H1 (cell line): ENCODE measurements at regions of chr2 and their contacts with region 1.

Region 1: DNA sequence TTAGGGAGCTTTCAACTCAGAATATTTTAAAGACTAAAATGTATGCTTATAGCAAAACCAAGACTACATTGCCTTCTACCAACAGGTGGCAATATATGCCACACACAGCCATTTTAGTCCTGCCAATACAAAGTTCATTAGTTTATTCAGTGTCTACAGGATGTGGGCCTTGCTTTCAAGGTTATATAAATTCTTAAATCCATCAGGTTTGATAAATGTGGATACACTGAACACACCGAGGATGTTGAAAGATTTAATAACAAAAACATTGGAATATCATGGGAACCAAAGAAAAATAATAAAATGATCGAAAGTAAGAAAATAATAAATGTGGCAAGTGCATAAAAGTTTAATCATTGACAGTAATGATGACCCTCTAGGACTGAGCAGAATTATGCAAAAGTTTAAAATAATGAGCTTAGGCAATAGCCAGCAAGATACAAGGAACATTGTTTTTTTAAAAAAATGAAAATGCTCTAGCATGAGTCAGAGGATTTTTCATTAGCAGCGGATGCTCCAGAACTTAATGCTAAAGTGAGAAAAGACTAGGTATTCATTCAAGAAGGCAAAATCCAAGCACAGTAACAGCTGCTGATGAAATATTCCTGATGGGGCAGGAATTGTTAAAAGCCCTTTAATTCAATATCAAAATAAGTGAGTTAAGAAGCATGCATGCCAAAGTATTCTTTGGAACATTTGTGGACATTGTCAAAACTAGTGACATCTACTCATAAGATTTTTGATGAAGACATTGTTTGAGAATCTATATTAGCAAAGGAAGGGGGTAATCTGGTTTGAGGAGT is 14.2 kb downstream of the SCN9A start:
- DNase-seq: no peak
- H3K4me3 ChIP-seq: no peak overlapping the region
- H3K27ac ChIP-seq: no peak overlapping the region
- H3K4me1 ChIP-seq: no peaks in the 10 kb centered on the region
- H3K27me3 ChIP-seq: no peaks in the 10 kb centered on the region
- CTCF ChIP-seq: peak in 2 of 3 experiments; percentile 47 to 52; a peak in 2 of 4 replicates
- EP300 ChIP-seq: no peak
- POLR2A ChIP-seq: no peak
- RAD21 ChIP-seq: peak; percentile 60 to 61

Region 2: DNA sequence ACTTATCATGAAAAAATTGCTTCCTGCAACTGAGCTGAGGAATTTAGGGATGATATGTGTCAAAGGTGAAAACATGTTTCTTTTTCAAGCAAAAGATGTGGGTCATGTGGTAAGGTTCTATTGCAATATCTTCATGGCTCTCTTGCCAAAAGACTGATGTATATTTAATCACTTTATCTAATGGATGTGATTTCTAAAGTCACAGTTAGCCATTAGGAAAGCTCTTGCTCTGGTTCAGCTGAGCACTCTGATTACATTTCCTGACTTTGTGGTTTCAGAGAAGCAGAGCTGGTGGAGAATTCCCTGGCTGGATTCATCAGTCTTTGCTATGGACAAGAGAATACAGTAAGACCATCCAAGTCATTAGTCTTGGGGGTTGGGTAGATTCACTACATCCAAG is 10.2 kb before region 1 on chr2:
- CTCF ChIA-PET with region 1: interaction called, 12 read pairs
- POLR2A ChIA-PET with region 1: no interaction called
- DNase-seq: no peak
- H3K4me3 ChIP-seq: no peak overlapping the region
- H3K27ac ChIP-seq: no peak overlapping the region
- H3K4me1 ChIP-seq: no peaks in the 10 kb centered on the region
- H3K27me3 ChIP-seq: no peaks in the 10 kb centered on the region
- CTCF ChIP-seq: no peak
- EP300 ChIP-seq: no peak
- POLR2A ChIP-seq: no peak
- RAD21 ChIP-seq: no peak

Region 3: GRCh38 chr2:166375736-166376487 is 14.4 kb after region 1 on chr2 and contains the start of gene SCN9A:
- CTCF ChIA-PET with region 1: interaction called, 15 read pairs
- POLR2A ChIA-PET with region 1: interaction called, 4 read pairs
- DNase-seq: peak; percentile 67 to 85
- H3K4me3 ChIP-seq: peak within 1 kb of the TSS; percentile 75 to 87 (median 80)
- H3K27ac ChIP-seq: no peak within 1 kb of the TSS
- H3K4me1 ChIP-seq: peaks cover 0 to 13% (median 9%) of the 10 kb centered on the region in 4 experiments; a peak in 5 of 7 replicates
- H3K27me3 ChIP-seq: no peaks in the 10 kb centered on the region; a peak in 1 of 7 replicates
- CTCF ChIP-seq: no peak
- EP300 ChIP-seq: no peak
- POLR2A ChIP-seq: peak in 1 of 2 experiments; percentile 36; a peak in 1 of 3 replicates
- RAD21 ChIP-seq: peak in 1 of 2 experiments; percentile 24; a peak in 2 of 4 replicates
- total RNA-seq, gene SCN9A: 6.1 and 6.2 TPM in 2 replicates

Region 4: DNA sequence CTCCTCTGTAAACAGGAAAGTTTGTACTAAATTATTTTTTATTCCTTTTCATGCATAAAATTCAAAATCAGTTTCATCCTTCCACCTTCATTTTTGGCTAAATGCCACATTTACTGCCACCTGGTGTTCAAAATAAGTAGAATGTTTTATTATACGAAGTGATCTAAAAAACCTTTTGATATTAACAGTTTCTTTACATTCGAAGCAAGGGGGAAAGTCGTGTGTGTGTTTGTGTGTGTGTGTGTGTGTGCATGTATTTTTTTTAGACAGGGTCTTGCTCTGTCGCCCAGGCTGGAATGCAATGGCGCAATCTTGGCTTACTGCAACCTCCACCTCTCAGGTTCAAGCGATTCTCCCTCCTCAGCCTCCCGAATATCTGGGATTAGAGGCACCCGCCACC is 23.2 kb after region 1 on chr2:
- CTCF ChIA-PET with region 1: interaction called, 20 read pairs
- POLR2A ChIA-PET with region 1: no interaction called
- DNase-seq: no peak
- H3K4me3 ChIP-seq: no peak overlapping the region
- H3K27ac ChIP-seq: no peak overlapping the region
- H3K4me1 ChIP-seq: no peaks in the 10 kb centered on the region
- H3K27me3 ChIP-seq: no peaks in the 10 kb centered on the region
- CTCF ChIP-seq: no peak
- EP300 ChIP-seq: no peak
- POLR2A ChIP-seq: no peak
- RAD21 ChIP-seq: peak in 1 of 2 experiments; percentile 11; a peak in 1 of 4 replicates

Region 5: DNA sequence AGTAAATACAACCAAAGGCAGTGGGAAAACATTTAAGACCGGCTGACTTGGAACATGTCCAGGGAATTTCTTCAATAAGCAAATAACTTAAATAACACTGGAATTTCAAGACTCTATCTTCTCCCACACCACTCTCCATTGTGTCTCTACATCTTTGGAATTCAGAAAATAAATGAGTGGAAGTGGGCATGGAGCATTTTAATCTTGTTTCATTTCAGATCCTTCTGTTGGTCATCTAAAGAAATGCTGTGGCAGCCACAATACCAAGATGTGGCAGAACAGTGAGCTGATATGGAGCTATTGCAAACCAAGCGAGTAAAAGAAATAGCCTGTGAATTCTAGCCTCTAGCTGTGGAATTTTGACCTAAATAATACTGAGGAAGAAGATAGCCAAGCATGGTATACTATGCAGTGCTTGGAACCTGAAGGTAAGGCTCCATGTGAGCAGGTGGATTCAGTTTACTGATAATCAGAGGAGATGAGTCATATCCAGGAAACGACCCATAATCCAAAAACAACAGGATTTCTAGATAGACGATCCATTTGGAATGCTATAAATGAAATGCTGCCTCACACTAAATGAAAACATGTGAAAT is 289.6 kb after region 1 on chr2:
- CTCF ChIA-PET with region 1: no interaction called
- POLR2A ChIA-PET with region 1: no interaction called
- DNase-seq: no peak
- H3K4me3 ChIP-seq: no peak overlapping the region
- H3K27ac ChIP-seq: no peak overlapping the region
- H3K4me1 ChIP-seq: no peaks in the 10 kb centered on the region
- H3K27me3 ChIP-seq: no peaks in the 10 kb centered on the region
- CTCF ChIP-seq: no peak
- EP300 ChIP-seq: no peak
- POLR2A ChIP-seq: no peak
- RAD21 ChIP-seq: no peak